ENCODE measurements at regions of chr4 and their contacts with region 1.

Region 1: DNA sequence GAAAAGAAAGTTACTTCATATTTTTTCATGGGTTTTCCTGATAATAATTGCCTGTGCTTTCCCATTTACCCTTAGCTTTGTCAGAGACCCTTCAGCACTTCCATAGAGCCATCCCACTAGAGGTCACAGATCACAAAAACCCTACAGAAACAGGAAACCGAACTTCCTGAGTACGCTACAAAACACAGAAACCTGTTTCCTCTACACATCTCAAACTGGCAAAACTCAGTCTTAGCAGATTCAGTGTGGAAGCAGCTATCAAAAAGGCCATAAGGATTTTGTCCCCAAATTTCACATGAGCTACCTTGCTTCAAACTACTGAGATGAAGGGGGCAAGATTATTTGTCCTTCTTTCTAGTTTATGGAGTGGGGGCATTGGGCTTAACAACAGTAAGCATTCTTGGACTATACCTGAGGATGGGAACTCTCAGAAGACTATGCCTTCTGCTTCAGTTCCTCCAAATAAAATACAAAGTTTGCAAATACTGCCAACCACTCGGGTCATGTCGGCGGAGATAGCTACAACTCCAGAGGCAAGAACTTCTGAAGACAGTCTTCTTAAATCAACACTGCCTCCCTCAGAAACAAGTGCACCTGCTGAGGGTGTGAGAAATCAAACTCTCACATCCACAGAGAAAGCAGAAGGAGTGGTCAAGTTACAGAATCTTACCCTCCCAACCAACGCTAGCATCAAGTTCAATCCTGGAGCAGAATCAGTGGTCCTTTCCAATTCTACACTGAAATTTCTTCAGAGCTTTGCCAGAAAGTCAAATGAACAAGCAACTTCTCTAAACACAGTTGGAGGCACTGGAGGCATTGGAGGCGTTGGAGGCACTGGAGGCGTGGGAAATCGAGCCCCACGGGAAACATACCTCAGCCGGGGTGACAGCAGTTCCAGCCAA is at the start of gene MMRN1:
- DNase-seq: no peak
- H3K4me3 Mint-ChIP-seq: no peak within 1 kb of the TSS
- H3K27ac Mint-ChIP-seq: no peak within 1 kb of the TSS
- H3K4me1 Mint-ChIP-seq: no peaks in the 10 kb centered on the region
- H3K27me3 Mint-ChIP-seq: no peaks in the 10 kb centered on the region
- CTCF ChIP-seq: no peak
- total RNA-seq, gene MMRN1: not detected in 2 replicates

Region 2: GRCh38 chr4:89640620-89641366 is 254.1 kb before region 1 on chr4:
- CTCF ChIA-PET with region 1: no interaction called
- intact Hi-C with region 1: loop called (anchors 5 kb)
- DNase-seq: peak; percentile 55
- H3K4me3 Mint-ChIP-seq: peak overlapping the region; percentile 55
- H3K27ac Mint-ChIP-seq: no peak overlapping the region
- H3K4me1 Mint-ChIP-seq: no peaks in the 10 kb centered on the region
- H3K27me3 Mint-ChIP-seq: no peaks in the 10 kb centered on the region
- CTCF ChIP-seq: peak; percentile 62

Measured in Calu3 (cell line).